Colonic mucosa (tissue), 4 donors: ENCODE measurements at regions of chr11 and their contacts with region 1.

Region 1: GRCh38 chr11:25981998-25982397 is 349.9 kb upstream of the ANO3 start:
- DNase-seq: peak; percentile 18
- H3K4me3 ChIP-seq: no peak overlapping the region
- H3K27ac ChIP-seq: no peak overlapping the region
- H3K4me1 ChIP-seq: no peaks in the 10 kb centered on the region
- H3K27me3 ChIP-seq: no peaks in the 10 kb centered on the region
- CTCF ChIP-seq: peak; percentile 28

Region 2: DNA sequence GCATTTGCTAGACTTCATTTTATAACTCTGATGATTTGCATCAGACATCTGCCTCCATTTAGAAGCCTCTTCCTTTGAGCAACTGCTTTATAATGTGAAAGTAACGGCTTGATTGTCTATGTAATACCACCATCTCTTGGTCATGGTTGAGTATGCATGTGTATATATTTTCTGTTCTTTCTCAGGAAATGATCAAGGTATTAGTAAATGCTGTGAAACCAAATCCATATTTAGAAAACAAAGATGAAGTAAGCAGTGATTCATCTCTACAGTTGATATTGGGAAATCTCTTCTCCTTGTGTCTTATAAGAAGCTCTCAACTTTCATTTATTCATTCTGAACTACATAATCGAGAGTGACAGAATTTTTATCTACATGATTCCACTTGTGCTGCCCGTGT is 245.3 kb after region 1 on chr11:
- intact Hi-C with region 1: loop called (anchors 5 kb)
- DNase-seq: no peak
- H3K4me3 ChIP-seq: no peak overlapping the region
- H3K27ac ChIP-seq: no peak overlapping the region
- H3K4me1 ChIP-seq: no peaks in the 10 kb centered on the region
- H3K27me3 ChIP-seq: no peaks in the 10 kb centered on the region
- CTCF ChIP-seq: peak; percentile 15

Region 3: DNA sequence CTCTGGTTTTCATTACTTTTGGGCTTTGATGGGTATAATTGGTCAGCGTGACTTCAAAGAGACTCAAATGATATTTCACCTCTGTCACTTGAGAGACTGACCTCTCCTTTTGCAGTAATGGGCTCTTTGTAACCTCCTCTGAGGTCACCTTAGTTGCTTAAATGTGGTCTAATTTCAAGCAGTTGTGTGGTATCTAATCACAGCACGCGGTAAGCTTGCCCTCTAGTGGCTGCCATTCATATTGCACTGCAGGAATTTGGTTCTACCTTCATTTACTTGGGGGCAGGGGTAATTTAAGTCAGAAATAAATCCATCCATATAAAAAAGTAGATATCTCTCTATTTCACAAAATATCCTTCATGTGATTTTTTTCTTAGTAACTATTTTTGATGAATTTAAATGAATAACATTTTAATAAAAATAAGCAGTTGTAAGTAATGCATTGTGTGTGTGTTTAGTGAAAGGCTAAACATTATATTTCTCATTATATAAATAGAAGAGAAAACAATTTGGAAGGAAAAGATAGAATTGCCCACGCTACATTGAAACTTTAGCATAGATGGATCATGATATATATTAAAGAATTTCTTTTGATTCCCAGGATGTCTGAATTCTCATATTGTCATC is 294.9 kb after region 1 on chr11:
- intact Hi-C with region 1: loop called (anchors 5 kb)
- DNase-seq: peak; percentile 53
- H3K4me3 ChIP-seq: no peak overlapping the region
- H3K27ac ChIP-seq: no peak overlapping the region
- H3K4me1 ChIP-seq: no peaks in the 10 kb centered on the region
- H3K27me3 ChIP-seq: no peaks in the 10 kb centered on the region
- CTCF ChIP-seq: peak; percentile 91